Activated T-helper 1 cell treated with anti-CD3 and anti-CD28 coated beads, Interleukin-12 subunit alpha, Interleukin-12 subunit beta, Interleukin-2, Interleukin-4 antibody, amounts not matched to agents 30 ng/mL and 10 ng/mL and 1 ng/mL, durations not matched to agents 14 hours and 24 hours and 36 hours (primary cell): ENCODE measurements at regions of chr6 and their contacts with region 1.

Region 1: DNA sequence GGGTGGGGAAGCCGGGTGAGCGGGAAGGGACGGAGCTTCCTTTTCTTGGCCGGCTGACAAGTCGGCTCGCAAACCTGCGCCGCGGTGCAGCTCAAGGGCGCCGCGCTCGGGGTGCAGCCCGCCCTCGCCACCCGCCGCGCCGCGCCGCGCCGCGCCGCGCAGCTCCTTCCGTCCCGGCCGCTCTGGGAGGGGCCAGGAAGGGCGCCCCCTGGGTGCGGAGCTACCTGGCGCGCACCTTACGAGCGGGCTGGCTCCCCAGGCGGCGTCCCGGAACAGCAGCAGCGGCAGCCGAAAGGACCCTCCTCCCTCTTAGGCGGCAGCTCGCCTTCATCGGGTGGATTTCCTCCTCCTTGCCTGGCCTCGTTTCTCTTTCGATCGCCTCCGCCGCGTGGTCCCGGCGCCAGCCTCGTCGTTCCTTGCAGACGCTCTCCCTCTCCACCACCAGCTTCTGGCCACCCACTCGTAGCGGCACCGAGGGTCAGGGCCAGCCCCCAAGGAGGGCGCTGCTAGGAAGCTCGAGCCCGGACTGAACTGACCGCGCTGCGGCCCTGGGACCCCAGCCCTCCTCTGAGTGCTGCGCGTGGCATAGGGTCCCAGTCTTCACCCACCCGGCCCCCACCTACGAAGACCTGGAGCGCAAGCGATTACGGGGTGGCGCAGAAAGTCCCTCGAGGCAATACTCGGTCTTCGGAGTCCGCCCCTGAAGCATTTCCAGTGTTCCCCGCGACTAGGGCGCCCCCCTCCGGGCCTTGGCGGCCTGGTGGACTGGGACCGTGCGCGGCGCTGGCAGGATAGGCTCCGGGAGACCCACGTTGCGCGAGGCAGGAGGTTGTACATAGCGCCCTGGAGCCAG is at the start of gene MAP3K5:
- DNase-seq: peak; percentile 90
- H3K4me3 Mint-ChIP-seq: peak within 1 kb of the TSS; percentile 91
- H3K27ac Mint-ChIP-seq: peak within 1 kb of the TSS; percentile 94
- H3K4me1 Mint-ChIP-seq: peaks cover 35% of the 10 kb centered on the region
- H3K27me3 Mint-ChIP-seq: peaks cover 4% of the 10 kb centered on the region
- total RNA-seq, gene MAP3K5: 12.2 and 13.4 TPM in 2 replicates

Region 2: DNA sequence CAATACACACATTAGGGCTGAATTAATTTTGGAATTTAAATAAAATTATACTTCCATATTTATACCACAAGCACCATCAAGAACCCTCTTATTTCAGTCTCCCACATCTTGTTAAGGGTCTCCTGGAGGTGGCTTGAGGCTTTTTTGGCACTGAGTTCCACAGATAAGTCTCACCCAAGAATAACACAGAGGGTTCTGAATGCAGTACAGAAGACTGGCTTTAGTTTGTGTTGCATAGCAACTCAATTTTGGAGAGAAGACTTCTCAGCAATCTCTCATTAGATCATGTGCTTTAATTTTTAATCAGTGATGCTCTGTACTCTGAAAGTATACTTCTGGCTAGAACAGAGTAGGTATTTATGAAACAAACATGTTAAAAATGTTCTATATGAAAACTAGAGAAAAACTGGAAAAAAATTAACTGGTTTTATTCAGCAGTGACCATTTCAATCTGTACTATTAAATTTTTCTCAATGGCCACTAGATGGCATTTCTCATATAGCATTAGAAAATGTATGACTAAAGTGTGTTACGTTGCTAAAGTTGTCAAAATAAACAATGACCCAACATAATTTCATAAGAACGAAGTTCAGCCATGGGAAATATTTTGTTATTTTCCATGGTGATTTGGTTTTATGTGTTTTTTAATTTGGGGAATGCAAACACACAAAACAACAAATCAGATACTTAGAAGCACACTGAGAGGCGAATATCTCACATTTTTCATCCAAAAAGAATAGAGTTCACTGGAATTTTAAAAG is 209.7 kb before region 1 on chr6:
- intact Hi-C with region 1: loop called (anchors 1 kb)
- DNase-seq: no peak
- H3K4me3 Mint-ChIP-seq: no peak overlapping the region
- H3K27ac Mint-ChIP-seq: no peak overlapping the region
- H3K4me1 Mint-ChIP-seq: peaks cover 6% of the 10 kb centered on the region
- H3K27me3 Mint-ChIP-seq: no peaks in the 10 kb centered on the region

Region 3: DNA sequence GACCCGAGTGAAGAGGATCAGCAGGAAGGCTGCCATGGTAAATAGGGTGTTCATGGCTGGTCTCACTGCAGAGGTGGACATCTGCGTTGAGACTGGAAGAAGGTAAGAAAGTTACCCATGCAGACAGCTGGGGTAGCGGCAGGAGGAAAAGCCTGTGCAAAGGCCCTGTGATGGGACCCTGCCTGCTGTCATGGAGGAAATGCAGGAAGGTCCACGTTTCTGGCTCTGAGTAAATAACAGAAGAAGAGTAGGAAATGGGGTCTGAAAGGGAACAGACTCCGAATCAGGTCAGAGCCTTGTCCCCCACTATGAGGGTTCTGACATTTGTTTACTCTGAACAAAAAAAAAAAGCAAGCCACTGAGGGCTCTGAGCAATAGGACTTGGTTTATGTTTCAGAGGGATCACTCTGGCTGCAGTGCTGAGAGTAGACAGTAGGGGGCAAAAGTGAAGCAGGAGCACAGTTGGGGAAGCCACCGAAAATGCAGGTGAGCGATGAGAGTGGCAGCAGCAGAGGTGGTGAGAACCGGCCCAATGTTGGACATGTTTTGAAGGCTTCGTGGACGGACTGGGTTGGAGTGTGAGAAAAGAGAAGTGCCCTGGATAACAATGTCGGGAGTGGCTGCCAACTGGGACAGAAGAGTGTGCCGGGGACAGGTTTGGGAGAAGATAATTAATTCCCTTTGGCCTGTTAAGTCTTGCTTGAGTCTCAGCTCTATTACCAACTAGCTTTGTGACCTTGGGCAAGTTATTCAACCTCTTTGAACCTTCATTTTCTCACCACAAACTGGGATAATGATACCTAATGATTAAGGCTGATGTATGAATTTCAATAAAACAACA is 184.5 kb before region 1 on chr6:
- intact Hi-C with region 1: loop called (anchors 1 kb)
- DNase-seq: peak; percentile 71
- H3K4me3 Mint-ChIP-seq: no peak overlapping the region
- H3K27ac Mint-ChIP-seq: peak overlapping the region; percentile 30
- H3K4me1 Mint-ChIP-seq: peaks cover 28% of the 10 kb centered on the region
- H3K27me3 Mint-ChIP-seq: no peaks in the 10 kb centered on the region

Region 4: DNA sequence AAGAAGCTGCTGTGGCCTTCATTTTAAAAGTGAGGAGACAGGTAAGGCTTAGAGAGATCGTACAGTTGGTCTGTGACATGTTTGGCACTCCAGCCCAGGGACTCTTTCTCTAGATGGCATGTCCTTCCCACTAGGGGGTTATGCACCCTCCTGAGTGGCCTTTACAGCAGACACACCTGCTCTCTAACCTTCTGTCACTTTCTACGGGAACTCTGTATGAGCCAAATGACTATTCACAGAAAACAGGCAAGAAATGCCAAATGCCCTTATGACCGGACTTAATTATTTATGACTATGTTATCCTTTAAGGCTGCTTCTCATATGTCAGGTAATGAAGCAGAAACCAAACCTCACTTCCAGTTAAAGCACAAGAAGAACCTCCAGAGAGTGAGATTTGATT is 91.6 kb before region 1 on chr6:
- intact Hi-C with region 1: loop called (anchors 2 kb)
- DNase-seq: no peak
- H3K4me3 Mint-ChIP-seq: no peak overlapping the region
- H3K27ac Mint-ChIP-seq: no peak overlapping the region
- H3K4me1 Mint-ChIP-seq: peaks cover 35% of the 10 kb centered on the region
- H3K27me3 Mint-ChIP-seq: no peaks in the 10 kb centered on the region

Region 5: DNA sequence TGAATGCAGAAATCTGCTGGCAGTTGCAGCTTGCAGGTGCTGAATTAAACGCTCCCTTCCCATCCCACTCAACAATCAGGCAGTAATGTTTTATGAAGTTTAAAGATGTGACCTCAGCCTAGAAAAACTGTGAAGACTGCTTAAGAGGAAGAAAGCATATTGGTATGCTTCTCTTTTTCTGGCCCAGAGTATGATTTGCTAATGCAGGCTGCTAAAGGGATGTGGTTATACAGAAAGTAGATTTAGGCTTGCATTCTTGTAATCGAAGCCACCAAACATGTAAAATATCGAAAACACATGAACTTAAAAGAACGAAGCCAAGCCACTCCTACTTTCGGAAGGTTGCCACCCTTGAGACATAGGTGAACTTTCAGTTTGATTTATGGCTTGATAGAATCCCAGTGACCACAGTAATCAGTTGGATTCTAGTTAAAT is 41.1 kb before region 1 on chr6:
- intact Hi-C with region 1: loop called (anchors 1 kb)
- DNase-seq: peak; percentile 45
- H3K4me3 Mint-ChIP-seq: peak overlapping the region; percentile 75
- H3K27ac Mint-ChIP-seq: peak overlapping the region; percentile 87
- H3K4me1 Mint-ChIP-seq: peaks cover 92% of the 10 kb centered on the region
- H3K27me3 Mint-ChIP-seq: no peaks in the 10 kb centered on the region

Region 6: GRCh38 chr6:136822376-136823127 is 29.9 kb after region 1 on chr6 and contains the start of gene PEX7:
- intact Hi-C with region 1: loop called (anchors 1 kb)
- DNase-seq: peak; percentile 85
- H3K4me3 Mint-ChIP-seq: peak within 1 kb of the TSS; percentile 91
- H3K27ac Mint-ChIP-seq: peak within 1 kb of the TSS; percentile 92
- H3K4me1 Mint-ChIP-seq: peaks cover 12% of the 10 kb centered on the region
- H3K27me3 Mint-ChIP-seq: peaks cover 6% of the 10 kb centered on the region
- total RNA-seq, gene PEX7: 3.7 and 4.2 TPM in 2 replicates

Region 7: DNA sequence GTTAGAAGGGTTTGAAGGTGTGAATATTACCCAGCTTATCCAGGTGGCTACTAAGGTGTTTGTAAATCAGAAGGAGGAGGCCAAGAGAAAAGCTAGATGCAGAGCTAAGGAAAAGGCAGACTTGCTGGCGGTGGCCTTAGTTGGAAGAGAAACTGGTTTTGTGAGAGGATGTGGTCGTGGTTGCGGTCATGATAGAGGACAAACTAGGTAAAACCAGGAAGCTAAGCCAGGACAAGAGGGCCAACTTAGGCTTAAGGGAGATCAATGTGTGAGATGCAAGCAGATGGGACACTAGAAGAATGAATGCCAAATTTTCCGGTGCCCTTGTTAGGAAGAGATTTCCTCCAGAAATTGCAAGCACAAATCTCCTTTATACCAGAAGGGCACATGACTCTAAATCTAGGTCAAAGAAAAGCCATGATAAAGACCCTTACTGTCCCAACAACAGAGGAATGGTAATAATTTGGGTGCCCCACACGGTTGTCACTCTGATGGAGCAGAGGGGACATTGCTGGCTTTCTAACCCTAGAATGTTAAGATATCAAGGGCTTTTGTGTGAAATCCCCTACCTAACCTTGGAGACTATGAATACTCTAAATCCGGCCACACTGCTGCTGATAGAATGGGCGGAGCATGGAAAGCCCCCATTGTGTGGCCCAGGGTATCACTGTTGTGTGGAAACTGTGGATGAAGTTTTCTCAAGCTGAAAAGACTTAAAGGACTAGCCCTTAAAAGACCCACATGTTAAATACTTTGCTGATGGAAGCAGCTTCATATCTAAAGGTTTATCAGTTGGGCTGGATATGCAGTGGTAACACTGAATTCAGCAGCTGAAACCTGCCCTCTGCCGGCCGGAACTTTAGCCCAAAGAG is 373.0 kb after region 1 on chr6:
- intact Hi-C with region 1: no loop called
- DNase-seq: peak; percentile 59
- H3K4me3 Mint-ChIP-seq: peak overlapping the region; percentile 30
- H3K27ac Mint-ChIP-seq: peak overlapping the region; percentile 64
- H3K4me1 Mint-ChIP-seq: peaks cover 59% of the 10 kb centered on the region
- H3K27me3 Mint-ChIP-seq: no peaks in the 10 kb centered on the region

Region 8: DNA sequence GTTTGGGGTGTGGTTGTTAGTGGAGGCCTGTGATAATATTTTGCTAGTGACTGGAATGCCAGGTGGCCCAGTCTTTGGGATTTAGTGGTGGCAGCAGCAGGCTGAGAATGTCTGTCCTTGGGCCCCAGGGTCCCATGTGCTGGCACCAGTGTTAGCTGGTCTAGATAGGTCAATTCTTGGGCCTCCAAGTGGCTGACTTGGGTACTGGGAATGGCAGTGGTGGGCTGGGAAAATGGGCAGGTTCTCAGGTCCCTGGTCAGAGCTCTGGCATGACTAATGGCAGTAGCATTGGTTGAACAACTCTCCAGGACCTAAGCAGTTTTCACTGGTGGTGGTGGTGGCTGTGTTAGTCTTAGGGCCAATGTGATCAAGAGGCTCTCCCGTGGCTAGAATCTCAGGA is 651.3 kb after region 1 on chr6:
- intact Hi-C with region 1: no loop called
- DNase-seq: no peak
- H3K4me3 Mint-ChIP-seq: no peak overlapping the region
- H3K27ac Mint-ChIP-seq: no peak overlapping the region
- H3K4me1 Mint-ChIP-seq: peaks cover 10% of the 10 kb centered on the region
- H3K27me3 Mint-ChIP-seq: peaks cover 22% of the 10 kb centered on the region